Gastrocnemius medialis (tissue), 4 donors: ENCODE measurements at regions of chr4 and their contacts with region 1.

Region 1: GRCh38 chr4:80184053-80184790 is 13.1 kb upstream of the PRDM8 start:
- DNase-seq: peak; percentile 57 to 66
- ATAC-seq: peak; percentile 73 to 78
- H3K4me3 ChIP-seq: peak overlapping the region; percentile 55 to 80 (median 58)
- H3K27ac ChIP-seq: peak overlapping the region; percentile 61 to 75 (median 66)
- H3K4me1 ChIP-seq: peaks cover 17 to 24% of the 10 kb centered on the region in 2 donors
- H3K27me3 ChIP-seq: peaks cover 60 to 64% (median 63%) of the 10 kb centered on the region in 3 donors
- CTCF ChIP-seq: peak; percentile 36 to 75 (median 62)
- POLR2A ChIP-seq: no peak

Region 2: DNA sequence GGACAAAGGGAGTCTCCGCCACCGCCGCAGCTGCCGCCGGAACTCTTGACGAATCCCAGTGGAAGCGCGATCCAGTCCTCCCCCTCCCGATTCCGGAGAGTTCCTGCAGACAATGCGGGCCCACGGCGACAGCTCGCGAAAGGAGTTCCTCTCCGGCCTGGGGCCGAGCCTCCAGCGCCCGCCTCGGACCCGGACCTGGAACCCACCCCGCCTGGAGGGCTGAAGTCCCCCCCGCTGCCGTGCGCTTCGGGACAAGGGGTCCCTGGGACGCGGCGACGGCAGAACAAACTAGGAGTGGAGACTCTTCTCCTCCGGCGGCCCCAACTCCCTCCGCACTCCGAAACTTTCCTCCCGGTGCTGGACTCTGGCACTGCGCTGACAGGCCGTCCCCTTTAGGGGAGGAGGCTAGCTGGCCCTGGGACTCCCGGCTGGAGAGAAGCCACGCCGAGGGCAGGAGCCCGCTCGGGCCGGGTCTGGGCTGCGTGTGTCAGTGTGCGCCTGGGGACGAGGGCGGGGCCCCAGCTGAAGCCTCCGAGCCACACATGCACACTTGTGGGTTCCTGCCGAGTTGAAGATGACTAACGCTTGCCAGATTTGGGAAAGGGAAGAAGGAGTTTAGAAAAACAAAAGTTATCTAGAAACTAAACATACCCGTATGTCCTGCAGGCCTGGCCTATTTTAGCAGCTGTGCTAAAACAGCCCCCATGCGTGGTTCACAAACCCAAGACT is 111.3 kb before region 1 on chr4 and contains the start of gene ANTXR2:
- in situ Hi-C with region 1: no loop called
- intact Hi-C with region 1: loop called (anchors 5 kb)
- DNase-seq: peak; percentile 71 to 85
- ATAC-seq: peak; percentile 80 to 82
- H3K4me3 ChIP-seq: peak within 1 kb of the TSS; percentile 79 to 92 (median 86)
- H3K27ac ChIP-seq: peak within 1 kb of the TSS; percentile 78 to 85 (median 82)
- H3K4me1 ChIP-seq: peaks cover 0 to 4% of the 10 kb centered on the region in 2 donors
- H3K27me3 ChIP-seq: no peaks in the 10 kb centered on the region
- CTCF ChIP-seq: no peak
- POLR2A ChIP-seq: peak; percentile 22 to 62
- total RNA-seq, gene ANTXR2: 14.5 to 41.0 (median 23.1) TPM

Region 3: DNA sequence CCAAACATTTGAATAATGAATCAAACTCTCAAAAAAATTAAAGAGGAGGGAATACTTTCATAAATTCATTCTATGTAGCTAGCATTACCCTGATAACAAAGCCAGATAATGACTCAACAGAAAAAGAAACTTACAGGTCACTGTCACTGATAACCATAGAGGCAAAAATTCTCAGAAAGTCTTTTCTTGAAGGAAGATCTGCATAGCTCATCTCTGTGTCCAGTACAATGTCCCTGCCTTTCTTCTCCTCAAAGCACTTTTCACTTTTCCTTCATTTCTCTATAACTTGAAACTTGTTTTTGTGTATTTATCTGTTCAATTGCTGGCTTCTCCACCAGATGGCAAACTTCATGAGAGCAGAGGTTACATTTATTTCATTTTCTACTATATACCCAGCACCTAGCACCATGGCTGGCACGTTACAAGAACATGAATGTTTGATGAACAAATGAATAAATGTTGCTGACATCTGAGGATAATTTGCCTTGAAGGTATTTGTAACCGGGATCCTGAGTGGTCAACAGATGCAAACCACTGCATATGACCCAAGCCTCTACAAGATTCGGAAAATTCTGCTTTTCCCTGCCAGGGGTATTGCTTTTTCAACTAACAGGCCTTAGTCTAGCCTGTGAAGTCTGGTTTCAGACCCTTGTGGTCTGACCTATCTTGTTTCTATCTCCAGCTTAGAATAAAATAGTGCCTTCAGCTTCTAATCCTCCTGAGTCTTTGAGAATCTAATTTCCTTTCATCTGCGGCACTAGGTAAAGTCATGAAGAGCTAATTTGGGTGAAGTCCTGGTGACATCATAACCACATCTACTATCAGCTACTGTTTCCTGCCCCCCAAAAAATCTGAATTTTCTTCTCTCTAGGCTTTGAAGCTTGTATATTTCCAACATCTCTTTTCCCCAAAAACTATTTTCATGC is 58.7 kb before region 1 on chr4:
- in situ Hi-C with region 1: no loop called
- intact Hi-C with region 1: loop called (anchors 10 kb)
- DNase-seq: no peak
- ATAC-seq: no peak
- H3K4me3 ChIP-seq: no peak overlapping the region
- H3K27ac ChIP-seq: no peak overlapping the region
- H3K4me1 ChIP-seq: no peaks in the 10 kb centered on the region
- H3K27me3 ChIP-seq: no peaks in the 10 kb centered on the region
- CTCF ChIP-seq: peak in 1 of 5 experiments; percentile 13
- POLR2A ChIP-seq: no peak

Region 4: DNA sequence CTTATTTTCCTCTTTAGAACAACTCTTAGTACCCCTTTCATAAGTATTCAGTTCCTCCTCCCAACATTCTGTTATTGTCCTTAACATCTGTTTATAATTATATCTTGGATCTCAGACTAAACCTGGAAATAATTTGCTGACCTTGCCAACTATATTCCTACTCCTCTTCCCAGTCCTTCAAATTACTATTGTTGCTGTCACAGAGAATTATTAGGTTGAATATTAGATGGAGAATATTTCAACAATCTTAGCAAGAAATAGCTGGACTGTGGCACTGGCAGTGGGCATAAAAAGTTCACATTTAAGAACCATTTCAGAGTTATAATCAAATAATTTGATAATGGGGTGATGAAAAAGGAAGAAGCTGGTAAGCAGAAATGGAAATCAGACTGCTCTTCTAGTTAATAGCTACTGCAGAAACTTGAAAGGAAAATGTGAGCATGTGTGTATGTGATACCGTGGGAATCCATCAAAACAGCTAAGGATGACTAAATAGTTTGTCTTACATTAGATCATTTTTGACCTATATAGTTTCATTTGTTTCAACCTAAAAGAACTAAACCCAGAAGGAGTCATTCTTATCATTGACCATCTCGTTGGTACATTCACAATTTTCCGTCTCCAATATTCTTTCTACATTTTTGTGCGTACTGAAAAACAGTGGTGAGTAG is 30.2 kb before region 1 on chr4:
- in situ Hi-C with region 1: no loop called
- intact Hi-C with region 1: no loop called
- DNase-seq: no peak
- ATAC-seq: no peak
- H3K4me3 ChIP-seq: no peak overlapping the region
- H3K27ac ChIP-seq: no peak overlapping the region
- H3K4me1 ChIP-seq: no peaks in the 10 kb centered on the region
- H3K27me3 ChIP-seq: no peaks in the 10 kb centered on the region
- CTCF ChIP-seq: no peak
- POLR2A ChIP-seq: no peak